Adrenal gland (tissue), 19 donors: ENCODE measurements at regions of chr7 and their contacts with region 1.

Region 1: GRCh38 chr7:136374962-136375361 is 397.8 kb upstream of the MTPN start:
- DNase-seq: no peak
- H3K4me3 ChIP-seq: no peak overlapping the region
- H3K27ac ChIP-seq: no peak overlapping the region
- H3K4me1 ChIP-seq: no peaks in the 10 kb centered on the region
- H3K27me3 ChIP-seq: no peaks in the 10 kb centered on the region
- CTCF ChIP-seq: no peak
- POLR2A ChIP-seq: no peak

Region 2: DNA sequence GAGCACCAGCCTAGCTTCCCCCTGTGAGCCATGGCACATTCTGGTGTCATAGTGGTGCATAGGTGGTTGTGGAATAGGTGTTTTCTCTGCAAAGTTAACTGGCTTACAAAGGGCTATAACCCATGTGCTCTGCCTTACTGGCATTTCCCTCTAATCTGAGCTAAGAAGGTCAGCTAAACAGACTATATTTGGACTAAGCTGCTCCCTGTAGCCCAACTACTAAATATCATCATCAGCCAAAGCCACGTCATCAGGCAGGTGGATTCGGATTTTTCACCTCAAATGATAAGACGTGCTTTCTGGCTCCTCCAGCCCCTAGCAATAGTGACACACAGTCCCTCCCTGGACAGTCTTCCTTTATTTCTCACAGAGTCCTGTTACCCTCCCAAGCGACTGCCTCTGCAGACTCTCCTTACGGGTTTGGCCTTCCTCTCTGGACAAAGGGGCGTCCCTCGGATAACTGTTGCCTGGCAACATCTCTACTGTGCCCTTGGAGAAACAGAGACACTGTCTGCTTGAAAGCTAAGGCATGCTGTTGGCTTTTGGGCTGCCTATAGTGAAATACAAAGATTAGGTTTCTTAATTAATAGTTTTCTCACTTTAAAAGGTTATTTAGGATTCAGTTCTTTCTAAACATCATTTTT is 656.0 kb before region 1 on chr7:
- intact Hi-C with region 1: no loop called
- DNase-seq: no peak
- H3K4me3 ChIP-seq: no peak overlapping the region
- H3K27ac ChIP-seq: no peak overlapping the region
- H3K4me1 ChIP-seq: peaks cover 0 to 4% of the 10 kb centered on the region in 2 donors
- H3K27me3 ChIP-seq: no peaks in the 10 kb centered on the region
- CTCF ChIP-seq: no peak
- POLR2A ChIP-seq: no peak

Region 3: GRCh38 chr7:136405931-136406777 is 31.2 kb after region 1 on chr7:
- intact Hi-C with region 1: loop called in 1 of 2 experiments (anchors 2 kb)
- DNase-seq: peak; percentile 15 to 67 (median 26)
- H3K4me3 ChIP-seq: no peak overlapping the region
- H3K27ac ChIP-seq: no peak overlapping the region
- H3K4me1 ChIP-seq: no peaks in the 10 kb centered on the region
- H3K27me3 ChIP-seq: no peaks in the 10 kb centered on the region
- CTCF ChIP-seq: peak; percentile 42 to 81 (median 61)
- POLR2A ChIP-seq: no peak

Region 4: DNA sequence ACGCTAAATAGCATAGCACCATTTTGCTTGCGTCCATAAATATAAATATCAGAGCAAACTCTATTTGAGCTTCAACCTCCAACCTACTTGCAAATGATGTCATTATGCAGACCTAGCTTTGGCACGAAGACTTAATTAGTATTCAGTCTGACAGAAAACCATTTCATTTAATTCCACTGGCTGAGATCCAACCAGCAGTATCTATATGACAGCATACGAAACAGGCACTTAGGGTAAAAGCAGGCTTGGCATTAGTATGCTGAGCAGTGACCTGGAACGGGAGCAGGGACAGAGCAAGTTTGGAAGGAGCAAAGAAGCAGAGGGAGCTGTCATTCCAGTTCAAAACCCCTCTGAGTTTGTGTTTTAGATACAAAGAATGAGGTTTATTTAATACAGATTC is 181.0 kb after region 1 on chr7:
- intact Hi-C with region 1: no loop called
- DNase-seq: no peak
- H3K4me3 ChIP-seq: no peak overlapping the region
- H3K27ac ChIP-seq: no peak overlapping the region
- H3K4me1 ChIP-seq: no peaks in the 10 kb centered on the region
- H3K27me3 ChIP-seq: no peaks in the 10 kb centered on the region
- CTCF ChIP-seq: no peak
- POLR2A ChIP-seq: no peak